Aorta (tissue), 5 donors: ENCODE measurements at regions of chr3 and their contacts with region 1.

Region 1: DNA sequence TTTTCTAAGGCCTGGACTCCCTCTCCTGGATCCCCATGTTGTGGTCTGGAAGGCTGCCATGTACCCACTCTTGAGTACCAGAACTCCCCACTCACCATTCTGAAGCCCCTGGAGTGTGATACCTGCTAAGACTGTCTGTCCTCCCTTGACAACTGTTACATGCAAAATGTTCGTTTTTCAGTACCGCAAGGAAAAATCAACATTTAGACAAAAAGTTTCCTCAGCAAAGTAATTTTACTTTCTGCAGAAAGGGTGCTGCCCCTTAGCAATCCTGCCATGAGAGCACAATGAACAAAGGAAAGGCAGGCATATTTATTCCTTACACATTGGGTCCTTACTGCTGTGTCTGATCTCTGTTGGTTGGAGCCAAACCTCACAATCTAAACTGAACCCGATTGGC is 7.0 kb upstream of the GK5 start:
- DNase-seq: no peak
- ATAC-seq: no peak
- H3K4me3 ChIP-seq: no peak overlapping the region
- H3K27ac ChIP-seq: no peak overlapping the region
- H3K4me1 ChIP-seq: no peaks in the 10 kb centered on the region
- H3K27me3 ChIP-seq: no peaks in the 10 kb centered on the region

Region 2: DNA sequence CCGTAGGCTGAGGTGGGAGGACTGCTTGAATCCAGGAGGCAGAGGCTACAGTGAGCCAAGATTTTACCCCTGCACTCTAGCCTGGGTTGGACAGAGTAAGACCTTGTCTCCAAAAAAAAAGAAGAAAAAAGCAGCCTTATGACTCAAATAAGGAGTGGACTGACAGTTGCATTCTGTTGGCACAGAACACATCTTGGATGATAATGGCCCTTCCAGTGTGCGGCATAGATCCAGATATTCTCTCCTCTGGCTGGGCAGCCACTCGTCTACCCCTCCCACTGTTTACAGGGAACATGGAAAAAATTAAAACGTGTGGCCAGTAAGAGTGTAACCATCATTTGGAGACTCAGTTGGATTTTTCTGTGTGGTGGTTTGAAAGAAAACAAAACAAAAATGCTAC is 612.9 kb before region 1 on chr3:
- intact Hi-C with region 1: no loop called
- DNase-seq: no peak
- ATAC-seq: no peak
- H3K4me3 ChIP-seq: no peak overlapping the region
- H3K27ac ChIP-seq: no peak overlapping the region
- H3K4me1 ChIP-seq: no peaks in the 10 kb centered on the region
- H3K27me3 ChIP-seq: no peaks in the 10 kb centered on the region

Region 3: GRCh38 chr3:142256693-142257333 is 24.5 kb after region 1 on chr3:
- intact Hi-C with region 1: loop called in 1 of 2 experiments (anchors 2 kb)
- DNase-seq: no peak
- ATAC-seq: no peak
- H3K4me3 ChIP-seq: no peak overlapping the region
- H3K27ac ChIP-seq: no peak overlapping the region
- H3K4me1 ChIP-seq: no peaks in the 10 kb centered on the region
- H3K27me3 ChIP-seq: no peaks in the 10 kb centered on the region